ENCODE measurements at regions of chr15 and their contacts with region 1.

Region 1: GRCh38 chr15:60585743-60586708 is 107.1 kb upstream of the ICE2 start:
- DNase-seq: peak; percentile 69
- H3K4me3 Mint-ChIP-seq: peak overlapping the region; percentile 63
- H3K27ac Mint-ChIP-seq: peak overlapping the region; percentile 67
- H3K4me1 Mint-ChIP-seq: peaks cover 78% of the 10 kb centered on the region
- H3K27me3 Mint-ChIP-seq: no peaks in the 10 kb centered on the region

Region 2: GRCh38 chr15:59688841-59689625 is 897.0 kb before region 1 on chr15 and contains the start of gene BNIP2:
- CTCF ChIA-PET with region 1: no interaction called
- POLR2A ChIA-PET with region 1: no interaction called
- intact Hi-C with region 1: loop called (anchors 5 kb)
- DNase-seq: peak; percentile 98
- H3K4me3 Mint-ChIP-seq: peak within 1 kb of the TSS; percentile 90
- H3K27ac Mint-ChIP-seq: peak within 1 kb of the TSS; percentile 93
- H3K4me1 Mint-ChIP-seq: peaks cover 43% of the 10 kb centered on the region
- H3K27me3 Mint-ChIP-seq: no peaks in the 10 kb centered on the region
- total RNA-seq, gene BNIP2: 55.2 to 58.0 TPM

Region 3: DNA sequence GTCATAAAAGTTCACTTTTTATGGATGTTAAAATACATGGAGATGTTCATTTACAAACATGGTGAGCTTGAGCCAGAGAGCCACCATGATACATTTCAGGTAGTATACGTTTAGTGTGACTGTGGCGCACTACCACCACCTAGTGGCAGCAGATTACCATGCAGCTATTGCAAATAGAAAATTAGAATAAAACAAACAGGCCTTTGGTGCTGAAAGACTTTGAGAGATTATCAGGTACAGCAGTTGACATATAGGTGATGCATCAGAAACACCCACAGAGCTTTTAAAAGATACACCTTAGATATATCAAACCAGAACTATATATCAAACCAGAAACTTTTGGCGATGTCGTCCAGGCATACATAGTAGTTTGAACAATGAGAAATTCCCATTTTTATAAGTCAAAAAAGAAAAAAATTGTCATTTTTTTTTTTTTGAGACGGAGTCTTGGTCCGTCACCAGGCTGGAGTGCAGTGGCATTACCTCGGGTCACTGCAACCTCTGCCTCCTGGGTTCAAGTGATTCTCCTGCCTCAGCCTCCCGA is 65.1 kb before region 1 on chr15:
- CTCF ChIA-PET with region 1: interaction called, 15 read pairs
- POLR2A ChIA-PET with region 1: interaction called, 5 read pairs
- intact Hi-C with region 1: loop called (anchors 5 kb)
- DNase-seq: peak; percentile 88
- H3K4me3 Mint-ChIP-seq: peak overlapping the region; percentile 20
- H3K27ac Mint-ChIP-seq: peak overlapping the region; percentile 56
- H3K4me1 Mint-ChIP-seq: peaks cover 60% of the 10 kb centered on the region
- H3K27me3 Mint-ChIP-seq: no peaks in the 10 kb centered on the region

Region 4: DNA sequence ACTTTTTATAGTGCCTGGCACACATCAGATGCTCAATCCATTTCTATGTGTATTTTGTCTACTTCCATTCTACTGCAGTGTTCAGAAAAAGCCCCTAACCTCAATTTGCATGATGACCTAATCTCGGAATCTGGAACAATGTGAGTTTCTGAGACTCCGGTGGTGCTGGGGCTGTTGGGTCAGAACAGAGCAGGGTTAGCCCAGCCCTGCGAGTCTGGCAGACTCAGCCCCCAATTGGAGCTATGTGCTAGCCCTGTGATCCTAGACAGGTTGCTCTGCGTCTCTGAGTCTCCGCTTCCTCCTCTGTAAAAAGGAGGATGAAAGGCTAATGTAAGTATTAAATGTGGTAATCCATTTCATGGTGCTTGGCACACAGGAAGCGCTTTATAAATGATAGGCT is 12.1 kb before region 1 on chr15:
- CTCF ChIA-PET with region 1: interaction called, 24 read pairs
- POLR2A ChIA-PET with region 1: interaction called, 41 read pairs
- intact Hi-C with region 1: loop called (anchors 1 kb)
- DNase-seq: peak; percentile 68
- H3K4me3 Mint-ChIP-seq: peak overlapping the region; percentile 64
- H3K27ac Mint-ChIP-seq: peak overlapping the region; percentile 85
- H3K4me1 Mint-ChIP-seq: peaks cover 88% of the 10 kb centered on the region
- H3K27me3 Mint-ChIP-seq: no peaks in the 10 kb centered on the region

Region 5: GRCh38 chr15:60605879-60606304 is 19.9 kb after region 1 on chr15:
- CTCF ChIA-PET with region 1: no interaction called
- POLR2A ChIA-PET with region 1: no interaction called
- intact Hi-C with region 1: no loop called
- DNase-seq: no peak
- H3K4me3 Mint-ChIP-seq: no peak overlapping the region
- H3K27ac Mint-ChIP-seq: no peak overlapping the region
- H3K4me1 Mint-ChIP-seq: peaks cover 12% of the 10 kb centered on the region
- H3K27me3 Mint-ChIP-seq: peaks cover 2% of the 10 kb centered on the region

Region 6: GRCh38 chr15:60787837-60788691 is 202.0 kb after region 1 on chr15:
- CTCF ChIA-PET with region 1: interaction called, 10 read pairs
- POLR2A ChIA-PET with region 1: interaction called, 7 read pairs
- intact Hi-C with region 1: no loop called
- DNase-seq: peak; percentile 77
- H3K4me3 Mint-ChIP-seq: peak overlapping the region; percentile 13
- H3K27ac Mint-ChIP-seq: peak overlapping the region; percentile 79
- H3K4me1 Mint-ChIP-seq: peaks cover 72% of the 10 kb centered on the region
- H3K27me3 Mint-ChIP-seq: no peaks in the 10 kb centered on the region

Region 7: DNA sequence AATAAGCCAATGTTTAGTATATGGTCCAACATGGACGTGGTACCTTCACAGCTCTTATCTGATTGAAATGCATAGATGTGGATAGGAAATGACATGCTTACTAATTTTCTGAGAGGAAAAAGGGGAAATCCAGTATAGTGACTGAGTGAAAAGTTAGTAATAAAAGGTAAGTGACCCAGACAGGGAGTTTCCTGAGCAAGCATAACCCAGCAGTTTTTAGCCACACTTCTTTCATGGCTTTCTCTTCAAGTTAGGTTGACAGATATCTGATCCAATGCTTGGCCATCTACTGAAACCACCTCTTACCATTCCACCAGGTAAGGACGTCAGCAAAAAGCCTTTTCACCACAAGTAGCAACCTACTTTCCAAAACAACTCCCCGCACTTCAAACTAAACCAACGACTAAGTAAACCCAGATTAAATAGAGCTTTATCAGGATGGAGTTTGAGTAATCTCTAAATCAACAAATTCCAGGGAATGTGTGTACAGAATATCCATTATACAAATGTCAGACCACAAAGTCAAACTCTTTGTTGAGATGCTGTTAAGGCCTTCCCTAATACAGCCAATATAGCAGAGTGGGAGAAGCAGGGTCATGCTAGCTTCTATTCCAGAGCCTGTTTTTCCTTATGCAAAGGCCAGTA is 313.4 kb after region 1 on chr15:
- CTCF ChIA-PET with region 1: interaction called, 6 read pairs
- POLR2A ChIA-PET with region 1: no interaction called
- intact Hi-C with region 1: loop called (anchors 1 kb)
- DNase-seq: peak; percentile 48
- H3K4me3 Mint-ChIP-seq: no peak overlapping the region
- H3K27ac Mint-ChIP-seq: peak overlapping the region; percentile 57
- H3K4me1 Mint-ChIP-seq: peaks cover 64% of the 10 kb centered on the region
- H3K27me3 Mint-ChIP-seq: peaks cover 4% of the 10 kb centered on the region

Region 8: DNA sequence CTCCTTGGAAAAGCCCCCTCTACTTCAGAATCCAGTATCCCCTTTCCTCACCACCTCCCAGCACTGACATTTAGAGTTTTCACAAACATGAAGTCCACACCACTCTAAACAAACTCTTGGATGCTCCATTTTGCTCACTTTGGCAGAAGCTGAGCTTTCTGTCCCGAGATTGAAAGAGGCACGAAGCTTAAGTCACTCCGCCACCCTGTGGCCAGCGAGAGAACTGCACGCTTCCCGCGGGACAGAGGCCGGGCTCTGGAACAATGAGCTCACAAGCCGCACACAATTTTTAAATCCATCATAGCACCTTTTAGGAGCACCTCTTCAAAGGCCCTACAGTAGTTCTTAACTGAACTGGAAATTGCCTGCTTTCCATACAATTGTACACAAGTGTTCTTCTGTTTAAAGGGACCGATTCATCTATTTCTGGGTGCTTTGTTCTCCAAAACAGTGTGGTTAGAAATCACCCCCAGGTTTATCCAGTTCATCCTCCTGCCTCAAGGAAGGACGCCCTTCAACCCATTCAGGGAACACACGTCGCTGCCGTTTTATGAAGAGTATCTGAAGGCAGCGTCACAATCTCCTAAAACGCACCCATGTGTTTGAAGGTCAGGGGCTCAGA is 1248.2 kb after region 1 on chr15:
- CTCF ChIA-PET with region 1: interaction called, 7 read pairs
- POLR2A ChIA-PET with region 1: no interaction called
- intact Hi-C with region 1: loop called (anchors 10 kb)
- DNase-seq: peak; percentile 84
- H3K4me3 Mint-ChIP-seq: no peak overlapping the region
- H3K27ac Mint-ChIP-seq: no peak overlapping the region
- H3K4me1 Mint-ChIP-seq: peaks cover 2% of the 10 kb centered on the region
- H3K27me3 Mint-ChIP-seq: peaks cover 17% of the 10 kb centered on the region

Measured in activated CD4-positive, alpha-beta memory T cell treated with anti-CD3 and anti-CD28 coated beads for 36 hours (primary cell).